Stomach (tissue), 19 donors: ENCODE measurements at regions of chr9 and their contacts with region 1.

Region 1: DNA sequence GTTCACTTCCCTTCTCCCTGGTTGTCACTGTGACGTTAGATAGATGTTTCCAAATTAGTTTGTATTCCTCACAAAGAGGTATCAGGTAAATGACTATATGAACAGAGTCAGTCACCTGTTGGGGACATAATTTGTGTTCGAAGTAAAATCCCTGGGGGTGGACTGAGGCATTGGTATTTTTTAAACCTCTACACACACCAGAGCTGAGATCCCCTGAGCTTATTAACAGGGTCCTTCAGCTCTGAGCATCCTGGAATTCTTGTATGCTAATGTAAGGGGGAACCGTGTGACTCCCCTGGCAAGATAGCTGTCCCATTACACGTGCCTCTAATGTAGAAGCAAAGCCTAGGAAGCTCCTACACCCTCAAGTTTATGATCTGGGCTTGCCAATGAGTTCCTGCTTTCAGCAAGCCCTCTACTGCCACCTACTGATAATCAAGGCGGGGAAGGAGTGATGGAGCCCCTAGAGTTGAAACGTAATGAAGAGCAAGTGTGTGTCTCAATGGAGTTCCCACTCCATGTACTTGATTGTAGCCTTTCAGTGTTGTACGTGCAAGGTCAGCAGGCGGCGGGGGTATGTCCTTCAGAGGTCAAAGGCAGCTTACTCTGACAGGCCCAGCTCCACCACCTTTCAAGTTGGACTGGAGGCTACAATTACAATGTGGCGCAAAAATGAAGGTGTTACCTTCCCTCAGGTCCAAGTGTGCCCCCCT is 14.4 kb downstream of the PRKACG start:
- DNase-seq: peak; percentile 66 to 90
- H3K4me3 ChIP-seq: no peak overlapping the region
- H3K27ac ChIP-seq: no peak overlapping the region
- H3K4me1 ChIP-seq: peaks cover 0 to 15% (median 0%) of the 10 kb centered on the region in 4 donors
- H3K27me3 ChIP-seq: no peaks in the 10 kb centered on the region
- CTCF ChIP-seq: peak in 5 of 7 experiments; percentile 57 to 87 (median 68)
- EP300 ChIP-seq: no peak
- POLR2A ChIP-seq: no peak

Region 2: GRCh38 chr9:68584189-68585033 is 415.1 kb before region 1 on chr9:
- intact Hi-C with region 1: loop called (anchors 10 kb)
- DNase-seq: peak; percentile 89 to 95
- H3K4me3 ChIP-seq: peak overlapping the region in 1 of 4 donors; percentile 10
- H3K27ac ChIP-seq: no peak overlapping the region
- H3K4me1 ChIP-seq: peaks cover 0 to 6% (median 0%) of the 10 kb centered on the region in 4 donors
- H3K27me3 ChIP-seq: no peaks in the 10 kb centered on the region
- CTCF ChIP-seq: peak in 6 of 7 experiments; percentile 36 to 99 (median 96)
- EP300 ChIP-seq: no peak
- POLR2A ChIP-seq: no peak